CD4-positive, alpha-beta memory T cell (primary cell): ENCODE measurements at regions of chr15 and their contacts with region 1.

Region 1: GRCh38 chr15:28975766-28976179 is 90.0 kb downstream of the APBA2 start:
- DNase-seq: peak; percentile 59 to 70 (median 66)
- H3K4me3 ChIP-seq: no peak overlapping the region
- H3K4me3 Mint-ChIP-seq: no peak overlapping the region
- H3K27ac ChIP-seq: no peak overlapping the region
- H3K27ac Mint-ChIP-seq: peak overlapping the region in 1 of 7 donors; percentile 68
- H3K4me1 ChIP-seq: no peaks in the 10 kb centered on the region
- H3K4me1 Mint-ChIP-seq: peaks cover 0 to 11% (median 1%) of the 10 kb centered on the region in 4 donors
- H3K27me3 ChIP-seq: no peaks in the 10 kb centered on the region
- H3K27me3 Mint-ChIP-seq: no peaks in the 10 kb centered on the region

Region 2: DNA sequence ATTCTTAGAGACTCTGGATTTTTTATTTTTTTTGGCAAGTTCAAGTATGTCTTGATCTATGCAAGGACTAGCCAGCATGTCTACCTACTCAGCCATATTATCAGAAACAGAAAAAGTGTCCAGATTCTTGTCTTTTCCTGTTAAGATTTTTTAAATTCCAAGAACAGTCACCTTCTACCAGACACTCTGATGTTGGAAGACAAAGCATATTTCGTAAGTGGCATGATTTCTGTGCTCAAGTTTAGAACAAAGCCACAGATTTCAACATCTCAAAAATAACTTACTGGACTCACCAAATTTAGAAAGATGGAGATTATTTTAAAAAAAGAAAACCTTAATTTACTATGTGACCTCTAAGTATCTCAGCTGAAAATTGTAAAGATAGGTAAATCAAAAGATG is 189.3 kb before region 1 on chr15:
- CTCF ChIA-PET with region 1: interaction called, 8 read pairs
- POLR2A ChIA-PET with region 1: no interaction called
- intact Hi-C with region 1: loop called (anchors 1 kb)
- DNase-seq: no peak
- H3K4me3 ChIP-seq: no peak overlapping the region
- H3K4me3 Mint-ChIP-seq: no peak overlapping the region
- H3K27ac ChIP-seq: no peak overlapping the region
- H3K27ac Mint-ChIP-seq: no peak overlapping the region
- H3K4me1 ChIP-seq: no peaks in the 10 kb centered on the region
- H3K4me1 Mint-ChIP-seq: peaks cover 0 to 4% (median under 1%) of the 10 kb centered on the region in 4 donors
- H3K27me3 ChIP-seq: no peaks in the 10 kb centered on the region
- H3K27me3 Mint-ChIP-seq: peaks cover 6 to 13% of the 10 kb centered on the region in 2 donors

Region 3: DNA sequence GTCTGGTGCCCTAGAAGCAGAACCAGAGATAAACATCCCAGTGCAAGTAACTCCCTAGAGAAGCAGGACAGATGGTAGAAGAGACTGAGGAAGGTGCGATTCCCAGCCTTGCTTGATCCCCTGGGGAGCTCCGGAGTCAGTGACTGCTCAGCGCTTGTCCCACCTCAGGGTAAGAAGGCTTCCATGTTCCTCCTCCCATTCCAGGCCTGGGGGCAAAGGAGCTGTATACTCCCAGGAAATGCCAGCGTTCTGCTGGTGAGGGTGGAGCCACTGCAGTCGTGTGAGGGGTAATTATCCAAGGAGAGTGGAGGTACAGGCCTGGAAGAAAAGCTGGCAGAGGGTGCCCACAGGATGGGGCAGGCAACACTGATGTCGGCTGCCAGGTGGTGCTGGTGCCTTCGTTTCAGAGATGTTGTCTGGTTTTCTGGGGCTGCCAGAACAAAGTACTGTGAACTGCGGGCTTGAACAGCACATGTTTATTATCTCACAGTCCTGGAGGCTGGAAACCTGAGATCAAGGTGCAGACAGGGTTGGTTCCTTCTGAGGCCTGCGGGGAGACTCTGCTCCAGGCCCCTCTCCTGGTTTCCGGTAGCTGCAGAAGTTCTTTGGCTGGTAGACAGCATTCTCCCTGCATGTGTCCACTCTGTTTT is 102.1 kb before region 1 on chr15:
- CTCF ChIA-PET with region 1: interaction called, 22 read pairs
- POLR2A ChIA-PET with region 1: no interaction called
- intact Hi-C with region 1: loop called (anchors 1 kb)
- DNase-seq: peak in 4 of 5 donors; percentile 19 to 37 (median 28)
- H3K4me3 ChIP-seq: no peak overlapping the region
- H3K4me3 Mint-ChIP-seq: no peak overlapping the region
- H3K27ac ChIP-seq: no peak overlapping the region
- H3K27ac Mint-ChIP-seq: no peak overlapping the region
- H3K4me1 ChIP-seq: no peaks in the 10 kb centered on the region
- H3K4me1 Mint-ChIP-seq: peaks cover 0 to 2% (median 0%) of the 10 kb centered on the region in 4 donors
- H3K27me3 ChIP-seq: no peaks in the 10 kb centered on the region
- H3K27me3 Mint-ChIP-seq: peaks cover 0 to 1% of the 10 kb centered on the region in 2 donors

Region 4: DNA sequence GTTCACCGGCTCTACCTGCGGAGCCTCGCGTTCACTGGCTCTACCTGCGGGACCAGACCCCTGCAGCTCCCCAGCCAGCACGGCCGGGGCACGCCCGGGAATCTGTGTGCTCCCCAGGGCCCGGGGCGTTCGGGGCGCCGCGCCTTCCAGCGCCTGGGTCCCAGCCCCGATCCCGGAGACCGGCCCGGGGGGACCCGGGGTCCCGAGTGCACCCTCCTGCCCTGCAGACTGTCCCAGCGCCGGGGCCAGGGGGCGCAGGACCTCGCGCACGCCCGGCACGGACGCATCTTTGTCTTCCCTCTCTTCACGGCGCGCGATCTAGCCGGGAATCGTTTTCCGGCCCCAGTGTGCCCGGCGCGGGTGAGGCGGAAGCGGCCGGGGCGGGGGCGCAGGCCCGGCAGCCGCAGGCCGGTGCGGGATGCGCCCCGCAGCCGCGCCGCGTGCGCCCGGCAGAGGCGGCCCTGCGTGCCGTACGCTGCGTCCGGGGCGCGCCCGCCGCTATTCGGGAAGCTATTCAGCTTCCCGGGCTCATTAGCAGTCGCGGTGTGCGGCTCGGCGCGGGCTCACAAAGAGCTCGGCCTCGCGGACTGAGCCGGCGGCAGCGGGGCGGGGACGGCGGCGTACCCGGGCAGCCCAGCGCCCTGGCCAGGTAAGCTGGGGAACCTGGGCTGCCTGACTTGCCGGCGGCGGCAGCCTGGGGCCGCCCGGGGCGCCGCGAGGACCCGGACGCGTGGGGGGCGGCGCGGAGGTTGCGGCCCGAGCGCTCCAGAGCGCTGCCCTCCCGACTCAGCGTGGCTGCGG is 89.9 kb before region 1 on chr15 and contains the start of gene APBA2:
- CTCF ChIA-PET with region 1: interaction called, 8 read pairs
- POLR2A ChIA-PET with region 1: interaction called, 3 read pairs
- intact Hi-C with region 1: loop called (anchors 1 kb)
- DNase-seq: peak; percentile 47 to 61 (median 59)
- H3K4me3 ChIP-seq: peak within 1 kb of the TSS in 1 of 2 donors; percentile 60
- H3K4me3 Mint-ChIP-seq: peak within 1 kb of the TSS; percentile 81 to 91 (median 86)
- H3K27ac ChIP-seq: no peak within 1 kb of the TSS
- H3K27ac Mint-ChIP-seq: peak within 1 kb of the TSS in 6 of 7 donors; percentile 23 to 87 (median 65)
- H3K4me1 ChIP-seq: peaks cover 50% of the 10 kb centered on the region
- H3K4me1 Mint-ChIP-seq: peaks cover 26 to 44% (median 34%) of the 10 kb centered on the region in 4 donors
- H3K27me3 ChIP-seq: no peaks in the 10 kb centered on the region
- H3K27me3 Mint-ChIP-seq: no peaks in the 10 kb centered on the region
- total RNA-seq, gene APBA2: 52.4 to 57.3 TPM

Region 5: DNA sequence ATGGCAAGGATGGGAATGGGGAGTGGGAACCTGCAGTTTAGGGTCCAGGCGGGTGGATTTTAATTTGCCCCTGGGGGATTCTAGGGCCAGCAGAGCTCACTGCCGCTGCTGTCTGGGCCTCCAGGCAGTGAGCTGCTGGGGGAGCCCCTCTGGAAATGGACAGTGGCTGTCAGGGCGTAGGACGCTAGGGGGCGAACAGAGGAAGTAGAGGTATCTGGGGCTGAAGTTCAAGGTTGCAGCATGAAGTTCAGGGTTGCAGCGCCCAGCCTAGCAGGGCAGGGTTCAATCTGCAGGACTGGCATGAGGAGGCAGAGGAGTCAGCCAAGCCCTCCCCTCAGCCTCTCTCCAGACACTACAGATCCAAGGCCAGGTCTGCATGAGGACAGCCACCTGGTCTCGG is 40.4 kb before region 1 on chr15:
- CTCF ChIA-PET with region 1: interaction called, 9 read pairs
- POLR2A ChIA-PET with region 1: no interaction called
- intact Hi-C with region 1: loop called (anchors 1 kb)
- DNase-seq: no peak
- H3K4me3 ChIP-seq: no peak overlapping the region
- H3K4me3 Mint-ChIP-seq: peak overlapping the region in 3 of 8 donors; percentile 11 to 18 (median 18)
- H3K27ac ChIP-seq: no peak overlapping the region
- H3K27ac Mint-ChIP-seq: peak overlapping the region in 4 of 7 donors; percentile 43 to 89 (median 70)
- H3K4me1 ChIP-seq: peaks cover 51% of the 10 kb centered on the region
- H3K4me1 Mint-ChIP-seq: peaks cover 34 to 75% (median 56%) of the 10 kb centered on the region in 4 donors
- H3K27me3 ChIP-seq: no peaks in the 10 kb centered on the region
- H3K27me3 Mint-ChIP-seq: no peaks in the 10 kb centered on the region

Region 6: GRCh38 chr15:28998511-28998910 is 22.7 kb after region 1 on chr15:
- CTCF ChIA-PET with region 1: no interaction called
- POLR2A ChIA-PET with region 1: no interaction called
- intact Hi-C with region 1: no loop called
- DNase-seq: no peak
- H3K4me3 ChIP-seq: no peak overlapping the region
- H3K4me3 Mint-ChIP-seq: no peak overlapping the region
- H3K27ac ChIP-seq: no peak overlapping the region
- H3K27ac Mint-ChIP-seq: no peak overlapping the region
- H3K4me1 ChIP-seq: no peaks in the 10 kb centered on the region
- H3K4me1 Mint-ChIP-seq: peaks cover 8 to 38% (median 10%) of the 10 kb centered on the region in 4 donors
- H3K27me3 ChIP-seq: no peaks in the 10 kb centered on the region
- H3K27me3 Mint-ChIP-seq: no peaks in the 10 kb centered on the region